PC-3 (cell line): ENCODE measurements at regions of chr6 and their contacts with region 1.

Region 1: GRCh38 chr6:41887331-41887751 is 7.8 kb downstream of the USP49 start:
- DNase-seq: no peak
- ATAC-seq: no peak
- H3K4me3 ChIP-seq: no peak overlapping the region
- H3K27ac ChIP-seq: no peak overlapping the region
- H3K4me1 ChIP-seq: no peaks in the 10 kb centered on the region
- H3K27me3 ChIP-seq: no peaks in the 10 kb centered on the region
- CTCF ChIP-seq: no peak

Region 2: GRCh38 chr6:41824571-41825569 is 62.5 kb before region 1 on chr6:
- CTCF ChIA-PET with region 1: interaction called, 10 read pairs
- POLR2A ChIA-PET with region 1: interaction called, 3 read pairs
- intact Hi-C with region 1: no loop called
- DNase-seq: peak; percentile 89
- ATAC-seq: peak; percentile 100
- H3K4me3 ChIP-seq: no peak overlapping the region
- H3K27ac ChIP-seq: peak overlapping the region; percentile 52
- H3K4me1 ChIP-seq: peaks cover 12% of the 10 kb centered on the region
- H3K27me3 ChIP-seq: no peaks in the 10 kb centered on the region
- CTCF ChIP-seq: no peak

Region 3: GRCh38 chr6:42269553-42269952 is 382.2 kb after region 1 on chr6:
- CTCF ChIA-PET with region 1: no interaction called
- POLR2A ChIA-PET with region 1: no interaction called
- intact Hi-C with region 1: no loop called
- DNase-seq: no peak
- ATAC-seq: no peak
- H3K4me3 ChIP-seq: no peak overlapping the region
- H3K27ac ChIP-seq: no peak overlapping the region
- H3K4me1 ChIP-seq: no peaks in the 10 kb centered on the region
- H3K27me3 ChIP-seq: no peaks in the 10 kb centered on the region
- CTCF ChIP-seq: no peak